GM23248 (cell line): ENCODE measurements at regions of chr18 and their contacts with region 1.

Region 1: DNA sequence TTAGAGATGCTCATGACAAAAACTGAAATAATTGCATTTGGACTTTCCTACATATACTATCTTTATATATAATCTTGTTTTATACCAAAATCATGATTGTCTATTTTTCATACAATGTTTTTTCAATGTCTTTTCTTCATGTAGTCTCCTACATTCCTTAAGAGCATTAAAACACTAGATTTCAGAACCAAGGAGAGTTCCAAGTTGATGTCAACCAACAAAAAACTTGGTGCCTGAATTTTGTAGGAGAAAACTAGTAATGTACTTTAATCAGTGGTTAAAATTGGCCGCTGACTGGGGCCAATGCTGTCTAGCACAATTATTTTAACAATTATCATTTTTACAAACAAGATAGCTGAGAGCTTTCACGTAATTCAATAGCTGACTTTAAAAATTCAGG is 678.8 kb downstream of the DCC start:
- DNase-seq: peak; percentile 2
- H3K4me3 ChIP-seq: no peak overlapping the region
- H3K27ac ChIP-seq: no peak overlapping the region
- H3K4me1 ChIP-seq: no peaks in the 10 kb centered on the region
- H3K27me3 ChIP-seq: no peaks in the 10 kb centered on the region

Region 2: GRCh38 chr18:52903857-52904256 is 114.9 kb before region 1 on chr18:
- in situ Hi-C with region 1: loop called (anchors 25 kb)
- DNase-seq: peak; percentile 2
- H3K4me3 ChIP-seq: no peak overlapping the region
- H3K27ac ChIP-seq: no peak overlapping the region
- H3K4me1 ChIP-seq: no peaks in the 10 kb centered on the region
- H3K27me3 ChIP-seq: no peaks in the 10 kb centered on the region